AG04449 (cell line): ENCODE measurements at regions of chr10 and their contacts with region 1.

Region 1: GRCh38 chr10:102009801-102010425 is 46.1 kb downstream of the ARMH3 start:
- DNase-seq: peak; percentile 73
- H3K4me3 ChIP-seq: no peak overlapping the region
- CTCF ChIP-seq: peak; percentile 82

Region 2: DNA sequence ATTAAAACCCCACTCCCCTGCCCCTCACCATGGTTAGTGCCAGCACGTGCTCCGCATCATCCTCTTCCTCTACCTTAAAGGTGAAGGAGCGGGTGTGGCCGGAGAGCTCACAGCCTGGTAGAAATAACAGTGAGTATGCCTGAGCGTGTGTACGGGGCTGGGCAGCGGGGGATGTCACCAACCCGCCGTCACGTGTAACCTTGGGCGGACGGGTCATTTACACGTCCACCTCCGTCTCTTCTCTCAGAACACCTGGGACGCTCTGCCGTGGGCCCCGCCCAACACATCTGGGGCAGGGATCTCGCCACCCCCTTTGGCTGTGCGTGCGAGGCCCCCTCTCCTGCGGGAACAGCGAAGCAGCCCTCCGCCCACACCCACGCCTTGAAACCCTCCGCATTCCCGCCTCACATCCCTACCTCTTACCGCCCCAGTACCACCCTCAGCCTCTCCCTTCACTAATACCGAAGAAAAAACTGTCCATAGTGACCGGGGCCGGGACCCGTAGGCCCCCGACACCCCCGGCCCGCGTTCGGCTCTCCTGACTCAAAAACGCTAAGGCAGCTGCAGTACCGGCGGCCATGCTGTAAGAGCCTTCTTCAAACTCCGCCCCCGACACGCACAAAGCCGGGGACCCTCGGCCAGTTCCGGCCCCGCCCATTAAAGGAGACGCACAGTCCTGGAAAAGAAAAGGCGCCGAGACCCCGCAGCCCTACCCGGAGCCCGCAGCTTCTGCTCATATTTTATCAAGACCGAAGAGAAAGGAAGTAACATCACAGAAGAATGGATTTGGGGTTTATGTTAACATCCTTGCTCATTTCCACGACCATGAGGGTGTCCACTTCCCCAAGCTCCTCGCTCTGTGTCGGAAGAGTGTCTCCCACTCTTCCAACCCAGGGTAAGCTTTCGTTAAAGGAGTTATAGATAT is 226.8 kb before region 1 on chr10 and contains the start of gene NPM3:
- CTCF ChIA-PET with region 1: interaction called, 13 read pairs
- POLR2A ChIA-PET with region 1: no interaction called
- DNase-seq: no peak
- H3K4me3 ChIP-seq: peak within 1 kb of the TSS; percentile 84
- CTCF ChIP-seq: no peak

Region 3: DNA sequence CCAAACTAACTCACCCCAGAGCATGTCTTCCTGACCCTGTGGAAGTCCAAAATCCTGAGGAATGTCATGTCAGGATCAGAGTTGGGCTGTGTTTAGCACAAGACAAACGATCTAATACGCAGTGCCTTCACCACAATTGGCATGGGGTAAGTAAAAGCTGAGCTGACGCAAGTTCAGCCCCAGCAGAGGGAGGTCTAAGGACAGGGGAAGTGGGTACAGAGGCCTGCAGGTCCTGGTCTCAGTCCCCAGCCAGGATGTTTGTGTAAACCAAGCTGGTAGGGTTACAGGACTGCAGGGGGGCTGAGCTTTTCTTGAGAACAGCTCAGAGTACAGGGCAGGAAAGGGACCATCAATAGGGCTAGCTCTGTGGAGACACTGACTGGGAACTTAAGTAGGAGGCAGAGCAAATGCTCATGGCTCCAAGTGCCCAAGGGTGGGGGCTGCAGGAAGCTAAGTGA is 161.0 kb before region 1 on chr10:
- CTCF ChIA-PET with region 1: interaction called, 581 read pairs
- POLR2A ChIA-PET with region 1: no interaction called
- DNase-seq: no peak
- H3K4me3 ChIP-seq: no peak overlapping the region
- CTCF ChIP-seq: no peak

Region 4: GRCh38 chr10:101897633-101898032 is 112.3 kb before region 1 on chr10:
- CTCF ChIA-PET with region 1: interaction called, 601 read pairs
- POLR2A ChIA-PET with region 1: no interaction called
- DNase-seq: no peak
- H3K4me3 ChIP-seq: no peak overlapping the region
- CTCF ChIP-seq: no peak

Region 5: GRCh38 chr10:101961591-101962498 is 48.1 kb before region 1 on chr10:
- CTCF ChIA-PET with region 1: interaction called, 14 read pairs
- POLR2A ChIA-PET with region 1: interaction called, 4 read pairs
- DNase-seq: no peak
- H3K4me3 ChIP-seq: no peak overlapping the region
- CTCF ChIP-seq: no peak

Region 6: DNA sequence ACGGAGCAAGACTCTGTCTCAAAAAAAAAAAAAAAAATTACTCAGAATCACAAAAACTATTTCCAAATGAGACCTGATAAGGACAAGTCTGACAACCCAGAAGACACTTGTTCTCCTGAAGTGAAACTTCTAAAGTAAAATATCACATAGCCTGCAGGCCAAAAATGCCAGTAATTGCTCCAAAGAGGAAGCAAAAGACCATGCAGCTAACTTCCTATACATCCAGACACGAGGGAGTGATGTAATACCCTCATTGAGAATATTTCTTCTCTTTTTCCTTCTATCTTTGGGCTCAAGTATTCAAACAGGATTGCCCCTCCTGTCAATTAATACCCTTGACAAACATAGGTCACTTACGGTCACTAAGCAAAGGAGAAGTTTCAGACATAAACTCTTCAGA is 14.9 kb after region 1 on chr10:
- CTCF ChIA-PET with region 1: interaction called, 48 read pairs
- POLR2A ChIA-PET with region 1: interaction called, 3 read pairs
- DNase-seq: no peak
- H3K4me3 ChIP-seq: no peak overlapping the region
- CTCF ChIP-seq: no peak

Region 7: DNA sequence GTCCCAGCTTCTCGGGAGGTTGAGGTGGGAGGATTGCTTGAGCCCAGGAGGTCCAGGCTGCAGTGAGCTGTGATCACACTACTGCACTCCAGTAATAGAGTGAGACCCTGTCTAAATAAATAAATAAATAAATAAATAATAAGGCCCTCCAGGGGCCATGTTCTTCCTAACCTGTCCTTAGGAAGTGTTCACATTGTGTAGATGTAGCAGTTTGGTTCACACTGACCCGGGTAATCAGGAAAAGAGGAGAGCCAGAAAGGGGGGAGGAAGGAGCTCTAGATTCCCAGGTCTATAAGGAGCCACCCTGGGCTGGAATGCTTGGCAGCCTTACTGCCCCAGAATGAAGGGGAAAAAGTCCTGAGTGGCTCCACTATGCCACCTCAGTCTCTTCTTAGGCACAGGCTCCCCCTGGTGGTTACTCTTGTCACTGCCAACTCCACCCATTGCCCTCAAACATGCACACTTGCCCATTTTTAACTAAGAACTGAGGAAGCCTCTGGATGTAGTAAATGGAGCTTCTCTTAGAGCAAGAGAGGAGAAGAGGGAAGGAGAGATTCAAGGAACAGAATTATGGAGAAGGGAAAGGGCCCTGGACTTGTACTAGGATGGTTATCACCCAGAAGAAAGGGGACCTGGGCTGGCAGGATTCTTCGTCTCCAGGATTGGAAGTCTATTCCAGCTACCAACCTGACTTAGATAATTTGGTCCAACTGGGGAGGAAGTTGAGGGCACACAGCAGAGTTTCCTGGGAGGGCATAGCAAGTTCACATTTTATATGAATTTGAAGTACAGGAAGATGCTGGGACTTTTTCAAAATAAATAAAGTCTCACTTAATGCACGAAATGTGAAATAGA is 63.0 kb after region 1 on chr10:
- CTCF ChIA-PET with region 1: interaction called, 12 read pairs
- POLR2A ChIA-PET with region 1: no interaction called
- DNase-seq: peak; percentile 28
- H3K4me3 ChIP-seq: no peak overlapping the region
- CTCF ChIP-seq: peak; percentile 91